ENCODE measurements at regions of chr20 and their contacts with region 1.

Region 1: GRCh38 chr20:45971675-45972499 is at the start of gene ZNF335:
- DNase-seq: peak; percentile 93
- H3K4me3 Mint-ChIP-seq: peak within 1 kb of the TSS; percentile 93
- H3K27ac Mint-ChIP-seq: peak within 1 kb of the TSS; percentile 100
- H3K4me1 Mint-ChIP-seq: peaks cover 16% of the 10 kb centered on the region
- H3K27me3 Mint-ChIP-seq: no peaks in the 10 kb centered on the region
- total RNA-seq, gene ZNF335: 26.8 to 28.0 TPM

Region 2: GRCh38 chr20:45798935-45799642 is 172.8 kb before region 1 on chr20:
- CTCF ChIA-PET with region 1: interaction called, 24 read pairs
- intact Hi-C with region 1: loop called (anchors 2 kb)
- DNase-seq: peak; percentile 82
- H3K4me3 Mint-ChIP-seq: no peak overlapping the region
- H3K27ac Mint-ChIP-seq: no peak overlapping the region
- H3K4me1 Mint-ChIP-seq: peaks cover 10% of the 10 kb centered on the region
- H3K27me3 Mint-ChIP-seq: no peaks in the 10 kb centered on the region

Region 3: DNA sequence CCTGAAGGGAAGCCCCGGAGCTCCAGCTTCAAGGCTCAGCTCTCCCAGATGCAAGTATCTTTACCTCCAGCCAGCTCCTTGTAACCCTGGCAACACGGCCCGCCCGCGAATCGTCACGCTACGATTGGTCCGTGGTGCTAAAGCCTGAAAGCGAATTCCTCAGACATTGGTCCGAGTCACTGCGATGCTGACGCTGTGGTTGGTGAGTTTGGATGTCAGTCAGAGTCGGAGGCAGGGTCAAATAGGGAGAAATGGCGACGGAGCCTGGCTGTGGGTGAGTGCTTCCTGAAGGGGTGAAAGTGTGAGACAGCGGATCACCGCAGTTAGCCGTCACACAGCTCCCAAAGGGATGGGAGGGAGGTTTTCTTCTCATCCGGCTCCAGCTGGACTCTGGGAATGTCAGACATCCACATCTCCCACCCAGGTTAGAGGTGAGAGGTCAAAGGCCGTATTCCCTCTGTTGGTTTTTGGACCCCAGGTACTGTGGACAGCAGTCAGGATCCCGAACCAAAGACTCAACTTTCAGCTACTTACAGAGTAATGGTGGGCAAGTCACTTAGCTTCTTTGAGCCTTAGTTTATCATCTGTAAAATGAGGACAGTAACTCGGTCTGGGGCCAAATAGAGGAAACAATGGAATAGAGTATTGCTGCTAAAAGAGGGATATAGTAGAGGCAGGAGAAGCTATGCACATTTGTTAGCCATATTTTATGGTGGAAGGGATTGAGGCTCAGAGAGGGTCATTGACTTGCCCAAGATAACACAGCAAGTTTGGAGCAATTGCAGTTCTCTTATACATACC is 90.7 kb before region 1 on chr20 and contains the start of gene ZSWIM1:
- CTCF ChIA-PET with region 1: interaction called, 4 read pairs
- intact Hi-C with region 1: loop called (anchors 2 kb)
- DNase-seq: peak; percentile 100
- H3K4me3 Mint-ChIP-seq: peak within 1 kb of the TSS; percentile 94
- H3K27ac Mint-ChIP-seq: peak within 1 kb of the TSS; percentile 93
- H3K4me1 Mint-ChIP-seq: peaks cover 48% of the 10 kb centered on the region
- H3K27me3 Mint-ChIP-seq: no peaks in the 10 kb centered on the region
- total RNA-seq, gene ZSWIM1: 8.2 to 8.4 TPM

Region 4: DNA sequence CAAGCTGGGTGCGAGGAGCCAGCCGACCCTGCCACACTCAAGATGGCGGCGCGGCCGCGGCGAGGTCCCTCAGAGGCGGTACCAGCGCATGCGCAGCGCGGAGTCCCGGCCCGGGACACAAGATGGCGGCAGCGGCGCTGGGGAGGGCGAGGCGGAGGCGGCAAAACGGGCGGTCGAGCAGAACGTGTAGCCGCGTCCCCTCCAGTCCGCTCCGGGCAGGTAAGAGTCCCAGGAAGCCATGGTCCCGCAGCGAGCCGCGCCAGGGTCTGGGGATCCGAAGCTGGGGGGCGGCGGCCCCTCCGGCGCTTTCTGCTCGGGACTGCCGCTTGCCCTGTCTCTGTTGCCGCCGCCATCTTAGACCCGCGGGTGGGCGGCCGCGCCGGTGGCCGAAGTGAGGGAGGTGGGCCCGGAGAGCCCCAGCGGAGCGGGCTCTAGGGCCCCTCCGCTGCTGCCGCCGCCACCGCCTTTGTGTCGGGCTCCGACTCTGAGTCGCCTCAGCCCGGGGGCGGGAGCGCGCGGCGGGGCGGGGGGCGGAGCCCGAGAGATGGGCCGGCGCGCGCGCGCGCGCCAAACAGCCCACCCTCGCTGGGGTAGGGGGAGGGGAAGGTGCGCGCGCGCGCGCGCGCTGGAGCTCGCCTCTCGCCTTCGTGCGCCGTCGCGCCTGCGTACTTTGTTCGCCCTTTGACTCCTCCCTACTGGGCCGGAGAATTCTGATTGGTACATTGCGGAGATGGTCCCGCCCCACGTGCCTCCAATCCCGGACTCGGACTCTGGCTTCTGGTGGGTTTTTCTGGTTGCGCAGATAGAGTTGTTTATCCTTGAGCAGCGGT is 37.1 kb before region 1 on chr20 and contains the start of gene PCIF1:
- CTCF ChIA-PET with region 1: interaction called, 19 read pairs
- intact Hi-C with region 1: loop called (anchors 1 kb)
- DNase-seq: peak; percentile 99
- H3K4me3 Mint-ChIP-seq: peak within 1 kb of the TSS; percentile 93
- H3K27ac Mint-ChIP-seq: peak within 1 kb of the TSS; percentile 95
- H3K4me1 Mint-ChIP-seq: peaks cover 30% of the 10 kb centered on the region
- H3K27me3 Mint-ChIP-seq: no peaks in the 10 kb centered on the region
- total RNA-seq, gene PCIF1: 39.2 to 39.5 TPM

Region 5: DNA sequence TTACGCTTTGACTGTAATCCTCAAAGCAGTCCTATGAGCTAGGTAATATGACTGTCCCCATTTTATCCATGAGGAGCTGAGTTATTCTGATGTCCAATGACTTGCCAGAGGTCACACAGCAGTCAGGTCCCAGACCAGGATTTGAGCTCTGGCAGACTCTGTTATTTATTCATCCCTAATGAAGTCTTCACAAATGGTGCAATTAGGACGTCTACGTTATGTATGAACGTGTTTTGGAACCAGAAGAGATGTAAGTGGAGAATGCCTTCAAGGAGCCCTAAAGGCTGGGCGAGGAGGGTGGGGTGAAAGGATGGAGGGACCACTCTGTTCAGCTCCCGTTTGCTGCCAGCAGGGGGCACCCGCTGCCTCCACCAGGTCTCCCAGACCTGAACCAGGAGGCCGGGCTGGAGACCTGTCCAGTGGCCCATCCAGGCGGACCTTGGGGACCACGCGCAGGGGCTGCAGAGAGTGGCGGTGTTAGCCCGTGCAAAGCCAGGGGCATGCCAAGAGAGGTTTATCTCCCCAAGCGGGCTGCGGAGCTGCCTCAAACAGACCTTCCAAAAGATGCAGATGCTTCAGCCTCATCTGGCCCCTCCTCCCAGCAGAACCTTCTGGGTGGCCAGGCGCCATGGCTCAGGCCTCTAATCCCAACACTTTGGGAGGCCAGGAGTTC is 15.4 kb after region 1 on chr20:
- CTCF ChIA-PET with region 1: interaction called, 34 read pairs
- intact Hi-C with region 1: no loop called
- DNase-seq: peak; percentile 85
- H3K4me3 Mint-ChIP-seq: no peak overlapping the region
- H3K27ac Mint-ChIP-seq: no peak overlapping the region
- H3K4me1 Mint-ChIP-seq: peaks cover 2% of the 10 kb centered on the region
- H3K27me3 Mint-ChIP-seq: no peaks in the 10 kb centered on the region

Region 6: DNA sequence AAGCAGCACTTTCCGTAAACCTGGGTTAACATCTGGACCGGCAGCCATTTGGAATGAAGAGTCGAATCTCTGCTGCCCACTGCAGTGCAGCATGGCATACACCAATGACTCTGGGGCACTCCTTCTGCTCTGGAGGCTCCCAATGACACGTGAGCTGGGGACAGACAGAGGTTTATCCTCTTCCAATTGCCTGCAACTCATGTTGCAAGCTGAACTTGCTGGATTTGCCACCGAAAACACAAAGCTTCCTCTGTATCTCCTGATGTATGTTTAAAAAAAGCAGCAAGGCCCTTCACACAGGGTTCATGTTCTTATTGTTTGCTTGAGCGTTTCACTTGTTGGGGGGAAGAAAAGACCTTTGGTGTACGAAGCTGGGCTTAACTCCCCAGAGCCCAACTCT is 107.1 kb after region 1 on chr20:
- CTCF ChIA-PET with region 1: no interaction called
- intact Hi-C with region 1: no loop called
- DNase-seq: no peak
- H3K4me3 Mint-ChIP-seq: no peak overlapping the region
- H3K27ac Mint-ChIP-seq: no peak overlapping the region
- H3K4me1 Mint-ChIP-seq: peaks cover 19% of the 10 kb centered on the region
- H3K27me3 Mint-ChIP-seq: no peaks in the 10 kb centered on the region

Region 7: DNA sequence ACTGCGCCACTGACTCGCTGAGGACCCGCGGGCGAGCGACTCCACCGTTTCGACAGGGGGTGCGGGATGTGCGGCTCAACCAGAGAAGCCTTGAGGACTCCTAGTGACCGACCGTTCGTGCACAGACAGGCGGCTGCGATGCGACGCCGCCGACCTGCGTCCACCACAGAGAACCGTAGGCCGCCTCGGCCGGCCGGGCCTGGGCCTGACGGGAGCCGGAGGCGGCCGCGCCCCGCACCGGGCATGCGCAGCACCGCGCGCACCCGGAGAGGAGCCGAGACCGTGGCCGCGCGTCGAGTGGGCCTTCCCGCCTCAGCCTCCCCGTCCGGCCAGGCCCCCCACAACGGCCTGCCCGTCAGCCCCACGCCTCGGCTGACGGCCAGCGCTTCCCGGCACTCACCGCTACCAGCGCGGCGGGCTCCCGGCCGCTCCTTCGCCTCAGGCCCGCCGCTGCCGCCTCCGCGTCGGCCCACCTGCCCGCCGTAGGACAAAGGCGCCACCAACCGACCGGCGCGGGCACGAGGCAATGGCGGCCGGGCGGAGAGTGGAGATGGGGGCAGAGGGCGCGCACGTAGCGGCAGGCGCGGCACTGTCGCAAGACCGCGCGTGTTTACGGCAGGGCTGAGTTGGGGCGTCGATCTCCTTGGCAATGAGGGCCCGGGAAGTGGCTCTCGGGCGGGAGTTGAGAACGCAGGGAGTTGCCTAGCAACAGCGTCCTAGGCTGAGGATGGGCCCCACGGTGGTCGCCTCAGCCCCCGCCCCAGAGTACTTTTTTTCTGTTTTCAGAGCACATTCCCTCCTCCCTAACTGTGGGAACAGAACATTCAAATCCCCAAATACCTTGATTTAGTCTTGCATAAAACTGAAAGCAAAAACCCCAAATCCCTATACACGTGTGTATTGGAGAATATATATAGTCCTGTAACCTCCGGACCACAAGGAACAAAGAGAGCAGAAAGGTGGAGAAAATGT is 117.8 kb after region 1 on chr20 and contains the start of gene NCOA5:
- CTCF ChIA-PET with region 1: interaction called, 9 read pairs
- intact Hi-C with region 1: loop called (anchors 1 kb)
- DNase-seq: peak; percentile 96
- H3K4me3 Mint-ChIP-seq: peak within 1 kb of the TSS; percentile 86
- H3K27ac Mint-ChIP-seq: peak within 1 kb of the TSS; percentile 77
- H3K4me1 Mint-ChIP-seq: peaks cover 47% of the 10 kb centered on the region
- H3K27me3 Mint-ChIP-seq: no peaks in the 10 kb centered on the region
- total RNA-seq, gene NCOA5: 4.4 to 5.1 TPM